CD4-positive, alpha-beta memory T cell (primary cell): ENCODE measurements at regions of chr11 and their contacts with region 1.

Region 1: DNA sequence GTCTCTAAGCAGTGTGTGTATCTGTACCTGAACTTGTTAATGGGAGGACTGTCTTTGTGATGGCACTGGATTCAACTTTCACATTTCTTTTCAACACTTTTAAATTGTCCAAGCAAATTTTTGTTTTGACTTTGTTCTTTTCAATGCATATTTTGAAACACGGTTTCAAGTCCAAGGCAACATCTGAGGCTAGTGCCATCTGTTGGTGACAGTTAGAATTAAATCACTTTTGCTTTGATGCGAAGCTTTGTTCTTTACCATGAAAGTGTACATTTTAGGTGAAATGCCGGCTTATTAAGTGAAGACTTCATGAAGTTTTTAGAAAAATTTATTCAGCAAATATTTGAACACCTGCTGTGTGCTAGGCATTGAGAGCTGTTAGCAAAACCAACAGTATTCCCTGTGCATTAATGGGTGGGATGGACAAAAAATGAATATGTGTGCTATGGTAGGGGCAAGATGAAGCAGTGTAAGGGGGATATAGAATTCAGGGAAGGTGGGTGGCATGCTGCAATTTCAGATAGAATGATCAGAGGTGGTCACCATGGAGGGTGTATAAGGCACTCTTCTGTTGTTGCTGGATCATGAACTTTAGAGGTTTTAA is 70.2 kb downstream of the DDX10 start:
- DNase-seq: peak in 4 of 5 donors; percentile 3 to 21 (median 9)
- H3K4me3 ChIP-seq: no peak overlapping the region
- H3K4me3 Mint-ChIP-seq: peak overlapping the region in 2 of 8 donors; percentile 4 to 52
- H3K27ac ChIP-seq: no peak overlapping the region
- H3K27ac Mint-ChIP-seq: peak overlapping the region in 2 of 7 donors; percentile 11 to 25
- H3K4me1 ChIP-seq: peaks cover 16% of the 10 kb centered on the region
- H3K4me1 Mint-ChIP-seq: peaks cover 21 to 31% (median 27%) of the 10 kb centered on the region in 4 donors
- H3K27me3 ChIP-seq: no peaks in the 10 kb centered on the region
- H3K27me3 Mint-ChIP-seq: no peaks in the 10 kb centered on the region

Region 2: DNA sequence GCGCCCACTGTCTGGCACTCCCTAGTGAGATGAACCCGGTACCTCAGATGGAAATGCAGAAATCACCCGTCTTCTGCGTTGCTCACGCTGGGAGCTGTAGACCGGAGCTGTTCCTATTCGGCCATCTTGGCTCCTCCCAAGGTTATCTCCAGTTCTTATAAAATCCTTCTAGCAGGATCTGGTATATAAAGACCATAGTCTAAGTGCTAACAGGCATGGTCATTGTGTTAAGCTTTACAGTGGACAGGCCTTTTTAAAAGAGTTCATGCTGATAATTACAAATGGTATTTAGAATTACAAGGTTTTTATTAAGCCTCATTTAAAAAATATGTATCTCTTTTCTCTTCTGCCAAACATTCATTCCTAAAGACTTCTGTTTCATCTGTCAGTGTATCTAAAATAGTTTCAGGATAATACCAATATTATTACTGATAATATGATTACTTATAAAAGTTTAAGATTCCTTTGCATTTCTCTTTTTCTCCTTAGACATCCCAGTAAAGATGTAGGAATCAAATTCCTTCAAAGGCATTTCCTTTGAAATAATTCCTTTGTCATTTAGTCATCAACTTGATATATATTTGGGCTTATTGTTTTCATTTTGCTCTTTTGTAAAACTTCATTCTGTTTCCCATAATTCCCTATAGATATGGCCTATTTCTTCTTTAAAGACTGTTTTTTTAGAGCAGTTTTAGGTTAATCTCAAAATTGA is 49.5 kb before region 1 on chr11:
- CTCF ChIA-PET with region 1: no interaction called
- POLR2A ChIA-PET with region 1: no interaction called
- intact Hi-C with region 1: loop called (anchors 5 kb)
- DNase-seq: no peak
- H3K4me3 ChIP-seq: no peak overlapping the region
- H3K4me3 Mint-ChIP-seq: no peak overlapping the region
- H3K27ac ChIP-seq: no peak overlapping the region
- H3K27ac Mint-ChIP-seq: no peak overlapping the region
- H3K4me1 ChIP-seq: no peaks in the 10 kb centered on the region
- H3K4me1 Mint-ChIP-seq: peaks cover 0 to 5% (median 3%) of the 10 kb centered on the region in 4 donors
- H3K27me3 ChIP-seq: no peaks in the 10 kb centered on the region
- H3K27me3 Mint-ChIP-seq: no peaks in the 10 kb centered on the region